ENCODE measurements at regions of chr1 and their contacts with region 1.

Region 1: DNA sequence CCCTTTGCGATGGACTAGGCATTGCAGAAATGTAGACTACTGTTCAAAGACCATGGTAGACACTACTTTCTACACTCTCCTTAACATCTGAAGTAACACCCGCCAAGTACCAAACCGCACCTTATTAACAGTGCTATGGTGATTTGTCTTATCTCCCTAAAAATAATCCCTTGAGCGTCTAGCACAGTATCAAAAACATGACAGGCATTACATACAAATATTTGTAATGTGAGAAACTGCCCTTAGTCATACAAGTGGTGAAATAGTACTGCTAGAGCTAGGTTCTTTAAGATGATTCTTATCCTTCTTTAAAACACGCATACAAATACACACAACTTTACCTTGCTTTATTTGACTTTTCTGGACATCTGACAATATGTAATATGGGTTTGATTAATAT is 27.2 kb downstream of the PUM1 start:
- DNase-seq: no peak
- H3K4me3 ChIP-seq: no peak overlapping the region
- H3K27ac ChIP-seq: no peak overlapping the region
- H3K4me1 ChIP-seq: peaks cover 37 to 77% (median 59%) of the 10 kb centered on the region in 4 donors
- H3K27me3 ChIP-seq: no peaks in the 10 kb centered on the region
- CTCF ChIP-seq: no peak
- EP300 ChIP-seq: no peak
- POLR2A ChIP-seq: no peak

Region 2: GRCh38 chr1:31007462-31007991 is 30.8 kb before region 1 on chr1:
- intact Hi-C with region 1: loop called (anchors 5 kb)
- DNase-seq: no peak
- H3K4me3 ChIP-seq: no peak overlapping the region
- H3K27ac ChIP-seq: peak overlapping the region in 3 of 4 donors; percentile 20 to 35 (median 25)
- H3K4me1 ChIP-seq: peaks cover 42 to 61% (median 58%) of the 10 kb centered on the region in 4 donors
- H3K27me3 ChIP-seq: no peaks in the 10 kb centered on the region
- CTCF ChIP-seq: no peak
- EP300 ChIP-seq: no peak
- POLR2A ChIP-seq: no peak

Region 3: GRCh38 chr1:31264790-31265386 is 226.5 kb after region 1 on chr1:
- intact Hi-C with region 1: no loop called
- DNase-seq: no peak
- H3K4me3 ChIP-seq: no peak overlapping the region
- H3K27ac ChIP-seq: no peak overlapping the region
- H3K4me1 ChIP-seq: peaks cover 0 to 13% (median 7%) of the 10 kb centered on the region in 4 donors
- H3K27me3 ChIP-seq: no peaks in the 10 kb centered on the region
- CTCF ChIP-seq: no peak
- EP300 ChIP-seq: no peak
- POLR2A ChIP-seq: no peak